HCT116 (cell line): ENCODE measurements at regions of chr14 and their contacts with region 1.

Region 1: DNA sequence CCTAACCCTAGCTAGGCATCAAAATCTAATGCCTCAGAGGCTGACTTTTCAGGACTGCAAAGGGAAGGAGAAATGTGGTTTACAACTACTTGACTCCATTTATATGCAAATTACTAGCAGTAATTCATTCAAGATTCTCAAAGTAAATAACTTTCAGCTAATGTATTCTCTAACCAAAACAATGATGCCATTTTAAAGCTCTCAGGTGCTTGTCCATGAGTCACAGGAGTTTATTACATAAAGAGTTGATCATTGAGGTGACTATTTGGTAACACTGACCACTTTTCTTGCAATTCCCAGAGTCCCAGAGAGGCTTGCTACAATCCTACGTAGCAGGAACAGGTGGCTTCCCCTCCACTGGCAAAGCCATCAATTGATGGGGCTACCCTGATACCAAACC is 109.0 kb upstream of the SLC35F4 start:
- DNase-seq: no peak
- ATAC-seq: no peak
- H3K4me3 ChIP-seq: no peak overlapping the region
- H3K27ac ChIP-seq: no peak overlapping the region
- H3K4me1 ChIP-seq: no peaks in the 10 kb centered on the region
- H3K27me3 ChIP-seq: peaks cover 72% of the 10 kb centered on the region
- CTCF ChIP-seq: no peak
- POLR2A ChIP-seq: no peak
- RAD21 ChIP-seq: no peak

Region 2: DNA sequence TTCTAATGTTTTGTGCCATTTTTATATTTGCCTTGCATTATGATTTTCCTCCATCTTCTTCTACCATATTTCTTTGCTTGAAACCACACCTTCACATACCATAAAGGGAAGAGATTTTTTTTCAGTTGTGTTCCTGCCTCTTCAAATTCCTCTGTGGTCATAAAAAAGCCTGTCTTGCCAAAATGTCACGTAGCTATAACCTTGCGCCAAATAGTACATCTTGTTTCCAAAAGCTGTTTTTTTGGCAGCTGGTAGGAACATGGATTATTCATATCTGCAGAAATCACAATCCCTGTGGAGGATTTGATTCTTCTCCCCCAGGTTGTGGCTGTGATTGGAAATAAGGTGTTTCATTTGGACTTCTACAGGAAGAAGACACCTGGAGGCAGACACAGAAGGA is 24.6 kb after region 1 on chr14:
- CTCF ChIA-PET with region 1: no interaction called
- POLR2A ChIA-PET with region 1: no interaction called
- RAD21 ChIA-PET with region 1: no interaction called
- intact Hi-C with region 1: no loop called
- DNase-seq: no peak
- ATAC-seq: no peak
- H3K4me3 ChIP-seq: no peak overlapping the region
- H3K27ac ChIP-seq: no peak overlapping the region
- H3K4me1 ChIP-seq: no peaks in the 10 kb centered on the region
- H3K27me3 ChIP-seq: peaks cover 71% of the 10 kb centered on the region
- CTCF ChIP-seq: no peak
- POLR2A ChIP-seq: no peak
- RAD21 ChIP-seq: no peak

Region 3: DNA sequence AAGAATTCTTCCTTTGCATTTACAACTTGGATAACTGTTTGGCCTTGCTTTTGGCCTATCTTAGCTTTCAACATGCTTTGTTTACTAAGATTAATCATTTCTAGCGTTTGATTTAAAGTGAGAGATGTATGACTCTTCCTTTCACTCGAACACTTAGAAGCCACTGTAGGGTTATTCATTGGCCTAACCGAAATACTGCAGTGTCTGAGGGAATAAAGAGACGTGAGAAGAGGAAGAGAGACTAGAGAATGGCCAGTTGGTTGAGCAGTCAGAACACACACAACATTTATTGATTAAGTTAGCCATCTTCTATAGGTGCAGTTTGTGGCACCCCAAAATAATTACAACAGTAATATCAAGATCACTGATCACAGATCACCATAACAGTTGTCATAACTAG is 1664.0 kb after region 1 on chr14:
- CTCF ChIA-PET with region 1: no interaction called
- POLR2A ChIA-PET with region 1: no interaction called
- RAD21 ChIA-PET with region 1: no interaction called
- intact Hi-C with region 1: loop called (anchors 10 kb)
- DNase-seq: no peak
- ATAC-seq: no peak
- H3K4me3 ChIP-seq: no peak overlapping the region
- H3K27ac ChIP-seq: no peak overlapping the region
- H3K4me1 ChIP-seq: no peaks in the 10 kb centered on the region
- H3K27me3 ChIP-seq: no peaks in the 10 kb centered on the region
- CTCF ChIP-seq: no peak
- POLR2A ChIP-seq: no peak
- RAD21 ChIP-seq: no peak